Activated CD8-positive, alpha-beta T cell treated with anti-CD3 and anti-CD28 coated beads for 36 hours (primary cell): ENCODE measurements at regions of chr11 and their contacts with region 1.

Region 1: GRCh38 chr11:47373876-47374720 is 4.2 kb downstream of the SPI1 start:
- DNase-seq: peak; percentile 89
- ATAC-seq: peak; percentile 89
- H3K4me3 Mint-ChIP-seq: no peak overlapping the region
- H3K27ac Mint-ChIP-seq: no peak overlapping the region
- H3K4me1 Mint-ChIP-seq: peaks cover 20% of the 10 kb centered on the region
- H3K27me3 Mint-ChIP-seq: no peaks in the 10 kb centered on the region
- CTCF ChIP-seq: peak; percentile 95

Region 2: DNA sequence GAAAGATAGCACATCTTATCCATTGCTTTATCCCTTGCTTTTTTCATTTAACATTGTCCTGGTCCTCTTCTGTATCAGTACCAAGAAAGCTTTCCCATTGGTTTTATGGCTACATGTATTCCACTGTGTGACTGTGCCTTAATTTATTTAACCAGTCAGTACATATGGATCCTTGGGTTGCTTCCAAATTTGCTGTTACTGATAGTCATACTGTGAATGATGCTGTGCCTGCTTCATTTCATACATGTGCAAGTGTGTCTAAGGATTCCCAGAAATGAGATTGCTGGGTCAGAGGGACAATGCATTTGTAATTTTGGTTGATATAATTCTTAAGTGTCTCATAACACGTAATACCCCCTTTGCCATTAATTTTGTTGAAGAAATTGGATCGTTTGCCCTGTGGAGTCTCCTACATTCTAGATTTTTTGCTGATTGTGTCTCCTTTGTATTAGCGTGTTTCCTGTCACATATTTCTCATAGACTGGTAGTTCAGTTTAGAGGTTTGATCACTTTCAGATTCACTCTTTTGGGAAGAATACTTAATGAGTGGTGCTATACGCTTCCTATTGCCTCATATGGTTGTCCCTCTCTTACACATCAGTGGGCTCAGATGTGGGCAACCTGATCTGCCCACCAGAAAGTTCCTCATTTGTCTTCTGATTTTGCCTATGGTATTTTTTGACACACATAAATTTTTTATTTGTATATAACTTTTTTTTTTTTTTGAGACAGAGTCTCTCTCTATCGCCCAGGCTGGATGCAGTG is 56.9 kb before region 1 on chr11:
- CTCF ChIA-PET with region 1: interaction called, 12 read pairs
- POLR2A ChIA-PET with region 1: no interaction called
- intact Hi-C with region 1: no loop called
- DNase-seq: no peak
- ATAC-seq: no peak
- H3K4me3 Mint-ChIP-seq: no peak overlapping the region
- H3K27ac Mint-ChIP-seq: peak overlapping the region; percentile 48
- H3K4me1 Mint-ChIP-seq: peaks cover 7% of the 10 kb centered on the region
- H3K27me3 Mint-ChIP-seq: no peaks in the 10 kb centered on the region
- CTCF ChIP-seq: no peak

Region 3: GRCh38 chr11:47394322-47395222 is 20.5 kb after region 1 on chr11:
- CTCF ChIA-PET with region 1: interaction called, 91 read pairs
- POLR2A ChIA-PET with region 1: interaction called, 5 read pairs
- intact Hi-C with region 1: no loop called
- DNase-seq: peak; percentile 73
- ATAC-seq: peak; percentile 87
- H3K4me3 Mint-ChIP-seq: peak overlapping the region; percentile 33
- H3K27ac Mint-ChIP-seq: peak overlapping the region; percentile 91
- H3K4me1 Mint-ChIP-seq: peaks cover 29% of the 10 kb centered on the region
- H3K27me3 Mint-ChIP-seq: no peaks in the 10 kb centered on the region
- CTCF ChIP-seq: no peak

Region 4: DNA sequence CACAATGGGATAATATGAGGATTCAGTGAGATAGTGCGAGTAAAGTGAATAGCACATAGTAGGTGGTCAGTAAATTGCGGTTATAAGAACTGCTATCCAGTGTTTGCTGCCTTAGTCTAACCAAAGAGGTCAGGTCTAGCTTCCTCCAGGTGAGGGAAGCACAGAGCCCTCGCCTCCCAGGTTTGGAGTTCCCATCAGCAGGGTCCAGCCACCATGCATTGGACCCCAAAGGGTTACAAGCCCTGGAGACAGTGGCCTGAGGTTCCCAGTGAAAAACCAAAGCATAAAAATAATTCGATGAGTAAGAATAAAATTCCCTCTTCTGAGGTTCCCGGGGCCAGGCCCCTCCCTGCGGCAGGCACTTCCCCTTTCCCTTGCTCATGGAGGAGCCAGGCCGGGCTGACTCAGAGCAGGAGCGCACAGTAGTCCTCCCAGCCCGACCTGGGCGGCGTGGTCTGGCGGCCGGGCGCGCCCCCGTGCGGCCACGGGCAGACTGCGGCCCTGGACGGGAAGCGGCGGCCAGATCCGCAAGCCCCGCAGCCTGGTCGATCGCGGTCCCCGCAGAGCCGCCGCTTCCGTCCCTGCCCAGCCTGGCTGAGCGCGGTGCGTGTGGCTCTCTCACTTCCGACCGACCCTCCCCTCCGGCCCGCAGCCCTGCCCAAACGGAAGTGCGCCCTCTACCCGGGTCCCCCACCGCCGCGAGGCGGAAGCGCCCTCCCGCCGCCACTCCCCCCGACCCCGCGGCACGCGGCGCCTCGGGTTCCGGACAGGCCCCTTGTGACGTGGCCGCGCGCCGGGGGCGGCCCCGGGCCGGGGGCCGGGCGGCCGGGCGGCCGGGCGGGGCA is 33.9 kb after region 1 on chr11 and contains the start of gene SLC39A13:
- CTCF ChIA-PET with region 1: interaction called, 108 read pairs
- POLR2A ChIA-PET with region 1: interaction called, 4 read pairs
- intact Hi-C with region 1: loop called (anchors 2 kb)
- DNase-seq: peak; percentile 90
- ATAC-seq: peak; percentile 92
- H3K4me3 Mint-ChIP-seq: peak within 1 kb of the TSS; percentile 88
- H3K27ac Mint-ChIP-seq: peak within 1 kb of the TSS; percentile 94
- H3K4me1 Mint-ChIP-seq: peaks cover 21% of the 10 kb centered on the region
- H3K27me3 Mint-ChIP-seq: no peaks in the 10 kb centered on the region
- CTCF ChIP-seq: peak; percentile 79
- total RNA-seq, gene SLC39A13: 10.0 to 10.5 TPM

Region 5: GRCh38 chr11:47454180-47454644 is 80.1 kb after region 1 on chr11:
- CTCF ChIA-PET with region 1: interaction called, 23 read pairs
- POLR2A ChIA-PET with region 1: no interaction called
- intact Hi-C with region 1: no loop called
- DNase-seq: peak; percentile 83
- ATAC-seq: peak; percentile 98
- H3K4me3 Mint-ChIP-seq: no peak overlapping the region
- H3K27ac Mint-ChIP-seq: no peak overlapping the region
- H3K4me1 Mint-ChIP-seq: peaks cover 6% of the 10 kb centered on the region
- H3K27me3 Mint-ChIP-seq: no peaks in the 10 kb centered on the region
- CTCF ChIP-seq: peak; percentile 76

Region 6: GRCh38 chr11:47854667-47855066 is 480.6 kb after region 1 on chr11:
- CTCF ChIA-PET with region 1: interaction called, 10 read pairs
- POLR2A ChIA-PET with region 1: no interaction called
- intact Hi-C with region 1: loop called (anchors 5 kb)
- DNase-seq: no peak
- ATAC-seq: no peak
- H3K4me3 Mint-ChIP-seq: no peak overlapping the region
- H3K27ac Mint-ChIP-seq: no peak overlapping the region
- H3K4me1 Mint-ChIP-seq: peaks cover 11% of the 10 kb centered on the region
- H3K27me3 Mint-ChIP-seq: no peaks in the 10 kb centered on the region
- CTCF ChIP-seq: no peak